Activated T-helper 1 cell treated with anti-CD3 and anti-CD28 coated beads, Interleukin-12 subunit alpha, Interleukin-12 subunit beta, Interleukin-2, Interleukin-4 antibody, amounts not matched to agents 30 ng/mL and 10 ng/mL and 1 ng/mL, durations not matched to agents 14 hours and 24 hours and 36 hours (primary cell): ENCODE measurements at regions of chr3 and their contacts with region 1.

Region 1: DNA sequence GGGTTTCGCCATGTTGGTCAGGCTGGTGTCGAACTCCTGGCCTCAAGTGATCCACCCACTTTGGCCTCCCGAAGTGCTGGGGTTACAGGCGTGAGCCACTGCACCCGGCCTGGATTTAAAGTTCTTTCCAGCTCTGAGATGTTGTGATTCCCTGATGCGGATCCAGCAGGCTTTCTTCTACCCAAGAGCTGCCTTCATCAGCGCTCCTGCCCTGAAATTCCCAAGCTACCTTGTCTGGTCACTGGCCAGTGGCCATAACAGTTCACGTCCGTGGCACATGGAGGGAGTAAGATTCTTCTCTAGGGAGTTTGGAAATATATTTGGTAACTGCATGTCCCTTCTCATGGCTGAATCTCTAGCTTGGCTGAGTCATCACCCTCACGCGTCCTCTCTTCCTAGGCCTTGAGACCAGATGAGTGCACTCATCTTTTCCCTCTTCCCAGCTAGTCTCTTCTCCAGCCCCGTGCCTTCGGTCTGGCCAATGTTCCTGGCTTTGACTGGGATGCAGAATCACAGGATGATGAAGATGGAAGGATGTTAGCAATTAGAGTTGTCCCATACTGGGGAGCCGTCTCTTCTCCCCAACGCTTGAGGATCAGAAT is 29.8 kb upstream of the APOD start:
- DNase-seq: no peak
- H3K4me3 Mint-ChIP-seq: no peak overlapping the region
- H3K27ac Mint-ChIP-seq: no peak overlapping the region
- H3K4me1 Mint-ChIP-seq: peaks cover 28% of the 10 kb centered on the region
- H3K27me3 Mint-ChIP-seq: peaks cover 6% of the 10 kb centered on the region

Region 2: GRCh38 chr3:195512798-195513345 is 100.7 kb before region 1 on chr3:
- intact Hi-C with region 1: no loop called
- DNase-seq: no peak
- H3K4me3 Mint-ChIP-seq: no peak overlapping the region
- H3K27ac Mint-ChIP-seq: no peak overlapping the region
- H3K4me1 Mint-ChIP-seq: peaks cover 6% of the 10 kb centered on the region
- H3K27me3 Mint-ChIP-seq: no peaks in the 10 kb centered on the region

Region 3: DNA sequence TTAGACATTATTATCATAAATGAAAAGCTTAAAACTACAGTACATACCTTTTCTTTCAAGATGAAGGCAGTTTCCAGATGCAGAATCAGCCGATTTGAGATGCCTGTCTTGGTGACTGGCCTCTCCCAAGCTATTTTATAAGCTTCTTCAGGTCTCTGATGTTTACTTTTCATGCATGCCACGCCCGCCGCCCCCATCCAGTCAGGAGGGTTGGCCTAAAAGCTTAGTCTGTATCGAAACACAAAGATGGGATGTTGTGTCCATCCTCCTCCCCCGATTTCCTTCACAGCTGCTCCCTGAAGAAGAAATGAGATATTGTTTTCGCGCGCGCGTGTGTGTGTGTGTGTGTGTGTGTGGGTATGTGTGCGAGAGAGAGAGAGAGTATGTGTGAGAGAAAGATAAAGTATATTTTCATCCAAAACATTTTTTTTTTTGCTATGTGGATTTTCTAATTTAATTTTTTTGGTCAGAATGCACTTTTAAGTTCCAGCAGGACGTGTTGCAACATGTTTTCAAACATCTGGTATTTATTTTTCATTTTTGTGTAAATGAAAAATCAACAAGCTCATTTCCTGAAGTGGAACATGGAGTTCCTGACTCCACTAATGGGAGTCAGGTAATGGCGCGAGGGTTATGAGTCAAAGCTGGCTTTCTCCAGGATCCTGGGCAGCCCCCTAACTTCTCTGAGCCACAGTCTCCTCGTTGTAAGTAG is 29.6 kb before region 1 on chr3 and contains the start of gene APOD:
- intact Hi-C with region 1: loop called (anchors 2 kb)
- DNase-seq: no peak
- H3K4me3 Mint-ChIP-seq: no peak within 1 kb of the TSS
- H3K27ac Mint-ChIP-seq: no peak within 1 kb of the TSS
- H3K4me1 Mint-ChIP-seq: peaks cover 21% of the 10 kb centered on the region
- H3K27me3 Mint-ChIP-seq: peaks cover 3% of the 10 kb centered on the region
- total RNA-seq, gene APOD: 3.4 and 4.0 TPM in 2 replicates

Region 4: GRCh38 chr3:195716865-195717210 is 103.3 kb after region 1 on chr3:
- intact Hi-C with region 1: loop called (anchors 2 kb)
- DNase-seq: no peak
- H3K4me3 Mint-ChIP-seq: no peak overlapping the region
- H3K27ac Mint-ChIP-seq: no peak overlapping the region
- H3K4me1 Mint-ChIP-seq: peaks cover 14% of the 10 kb centered on the region
- H3K27me3 Mint-ChIP-seq: no peaks in the 10 kb centered on the region